Prostate gland (tissue), 2 donors: ENCODE measurements at regions of chr6 and their contacts with region 1.

Region 1: DNA sequence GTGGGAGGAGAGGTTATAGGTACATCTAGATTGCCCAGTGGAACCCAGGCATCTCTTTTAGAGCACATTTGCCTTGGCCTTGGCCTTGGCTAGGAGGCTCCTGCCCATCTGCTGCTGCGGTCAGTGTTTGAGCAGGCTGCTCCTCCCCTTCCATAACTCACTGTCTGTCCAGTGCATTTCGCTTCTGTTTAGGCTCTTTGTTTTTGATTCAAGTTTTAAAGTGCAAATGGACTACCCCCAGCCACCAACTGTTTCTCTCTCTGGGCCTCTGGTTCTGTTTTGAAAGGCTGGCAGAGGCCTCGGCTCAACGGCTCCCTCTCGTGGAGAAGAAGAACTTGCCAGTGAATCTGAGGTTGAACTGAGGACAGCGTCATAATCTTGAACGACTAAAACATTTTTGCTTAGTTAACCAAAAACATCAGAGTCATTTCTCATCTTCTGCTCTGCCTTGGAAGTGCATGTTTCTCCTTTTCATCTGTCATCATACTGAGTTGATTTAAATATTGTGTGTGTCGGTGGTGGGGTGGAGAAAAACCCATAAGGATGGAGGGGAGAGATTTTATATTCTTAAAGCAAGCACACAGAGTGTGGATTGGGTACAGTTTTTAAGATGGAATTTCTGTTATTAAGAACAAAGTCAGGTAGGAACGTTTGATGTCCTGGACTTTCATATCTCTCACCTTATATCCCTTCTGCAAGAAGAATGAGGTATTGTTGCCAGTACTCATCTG is 171.4 kb downstream of the DTNBP1 start:
- DNase-seq: peak; percentile 67
- H3K4me3 ChIP-seq: no peak overlapping the region
- H3K27ac ChIP-seq: no peak overlapping the region
- H3K4me1 ChIP-seq: no peaks in the 10 kb centered on the region
- H3K27me3 ChIP-seq: no peaks in the 10 kb centered on the region
- CTCF ChIP-seq: peak; percentile 80 to 85 (median 84)
- POLR2A ChIP-seq: no peak

Region 2: GRCh38 chr6:14210663-14211561 is 1280.5 kb before region 1 on chr6:
- intact Hi-C with region 1: loop called (anchors 2 kb)
- DNase-seq: peak; percentile 93
- H3K4me3 ChIP-seq: peak overlapping the region; percentile 53 to 65
- H3K27ac ChIP-seq: peak overlapping the region; percentile 65 to 80
- H3K4me1 ChIP-seq: no peaks in the 10 kb centered on the region
- H3K27me3 ChIP-seq: no peaks in the 10 kb centered on the region
- CTCF ChIP-seq: peak; percentile 64 to 98 (median 90)
- POLR2A ChIP-seq: peak; percentile 21

Region 3: DNA sequence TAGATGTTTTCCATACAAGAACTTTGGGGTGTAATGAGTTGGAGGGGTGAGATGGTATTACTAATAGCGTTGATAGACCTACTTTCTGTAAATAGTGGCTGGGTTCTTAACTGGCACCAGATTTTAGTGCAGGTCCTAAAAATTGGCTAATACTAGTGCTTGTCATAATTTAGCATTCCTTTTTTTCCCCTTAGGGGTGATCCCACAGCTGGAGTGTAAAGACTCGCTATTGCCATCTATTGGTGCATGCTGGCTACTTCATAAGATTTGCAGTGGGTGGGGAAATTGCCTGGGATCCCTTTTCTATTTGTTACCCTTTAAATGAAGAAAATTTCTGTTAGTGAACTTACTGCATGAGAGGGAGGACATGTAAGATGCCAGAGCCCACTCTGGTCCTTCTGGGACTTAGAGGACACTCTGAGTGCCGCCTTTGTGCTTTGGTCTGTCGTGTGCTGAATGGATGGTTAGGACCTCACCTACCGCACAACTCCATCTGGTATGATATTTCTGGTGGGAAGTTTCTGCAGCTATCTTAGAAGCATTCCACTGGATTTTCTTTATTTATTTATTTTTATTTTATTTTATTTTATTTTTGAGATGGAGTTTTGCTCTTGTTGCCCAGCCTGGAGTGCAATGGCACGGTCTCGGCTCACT is 50.1 kb before region 1 on chr6:
- intact Hi-C with region 1: loop called (anchors 5 kb)
- DNase-seq: no peak
- H3K4me3 ChIP-seq: no peak overlapping the region
- H3K27ac ChIP-seq: no peak overlapping the region
- H3K4me1 ChIP-seq: peaks cover 2% of the 10 kb centered on the region
- H3K27me3 ChIP-seq: no peaks in the 10 kb centered on the region
- CTCF ChIP-seq: peak in 3 of 4 experiments; percentile 55 to 69 (median 67)
- POLR2A ChIP-seq: no peak

Region 4: DNA sequence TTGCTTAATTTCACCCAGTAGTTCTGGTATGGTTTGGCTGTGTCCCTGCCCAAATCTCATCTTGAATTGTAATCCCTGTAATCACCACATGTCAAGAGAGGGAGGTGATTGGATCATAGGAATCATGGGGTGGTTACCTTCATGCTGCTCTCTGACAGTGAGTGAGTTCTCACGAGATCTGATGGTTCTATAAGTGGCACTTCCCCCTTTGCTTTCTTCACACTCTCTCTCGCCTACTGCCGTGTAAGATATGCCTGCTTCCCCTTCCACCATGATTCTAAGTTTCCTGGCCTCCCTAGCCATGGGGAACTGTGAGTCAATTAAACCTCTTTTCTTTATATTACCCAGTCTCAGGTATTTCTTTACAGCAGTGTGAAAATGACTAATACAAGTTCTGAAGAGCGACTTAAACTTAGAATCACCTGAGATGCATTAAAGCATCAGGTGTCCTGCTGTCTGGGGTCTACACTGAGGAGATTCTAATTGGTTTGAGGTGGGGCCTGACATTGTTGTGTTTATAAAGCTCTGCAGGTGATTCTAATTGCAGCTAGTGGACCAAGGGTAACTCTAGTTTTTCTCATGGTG is 253.5 kb after region 1 on chr6:
- intact Hi-C with region 1: no loop called
- DNase-seq: no peak
- H3K4me3 ChIP-seq: no peak overlapping the region
- H3K27ac ChIP-seq: no peak overlapping the region
- H3K4me1 ChIP-seq: no peaks in the 10 kb centered on the region
- H3K27me3 ChIP-seq: no peaks in the 10 kb centered on the region
- CTCF ChIP-seq: no peak
- POLR2A ChIP-seq: no peak